Caco-2 (cell line): ENCODE measurements at regions of chr11 and their contacts with region 1.

Region 1: GRCh38 chr11:46916286-46917108 is 1.9 kb downstream of the LRP4 start:
- DNase-seq: peak; percentile 66 to 69
- H3K4me3 ChIP-seq: peak overlapping the region; percentile 74
- H3K4me3 Mint-ChIP-seq: peak overlapping the region; percentile 88
- H3K27ac Mint-ChIP-seq: peak overlapping the region; percentile 65
- H3K4me1 ChIP-seq: peaks cover 11% of the 10 kb centered on the region; the same call in 1 of the 2 replicates
- H3K4me1 Mint-ChIP-seq: peaks cover 20% of the 10 kb centered on the region
- H3K27me3 ChIP-seq: no peaks in the 10 kb centered on the region
- H3K27me3 Mint-ChIP-seq: no peaks in the 10 kb centered on the region
- CTCF ChIP-seq: peak in 1 of 2 experiments; percentile 36

Region 2: GRCh38 chr11:46808799-46809431 is 107.6 kb before region 1 on chr11:
- CTCF ChIA-PET with region 1: no interaction called
- POLR2A ChIA-PET with region 1: no interaction called
- intact Hi-C with region 1: no loop called
- DNase-seq: peak in 1 of 2 experiments; percentile 35
- H3K4me3 ChIP-seq: no peak overlapping the region
- H3K4me3 Mint-ChIP-seq: no peak overlapping the region
- H3K27ac Mint-ChIP-seq: no peak overlapping the region
- H3K4me1 ChIP-seq: no peaks in the 10 kb centered on the region
- H3K4me1 Mint-ChIP-seq: peaks cover 6% of the 10 kb centered on the region
- H3K27me3 ChIP-seq: no peaks in the 10 kb centered on the region
- H3K27me3 Mint-ChIP-seq: no peaks in the 10 kb centered on the region
- CTCF ChIP-seq: peak; percentile 18 to 56

Region 3: DNA sequence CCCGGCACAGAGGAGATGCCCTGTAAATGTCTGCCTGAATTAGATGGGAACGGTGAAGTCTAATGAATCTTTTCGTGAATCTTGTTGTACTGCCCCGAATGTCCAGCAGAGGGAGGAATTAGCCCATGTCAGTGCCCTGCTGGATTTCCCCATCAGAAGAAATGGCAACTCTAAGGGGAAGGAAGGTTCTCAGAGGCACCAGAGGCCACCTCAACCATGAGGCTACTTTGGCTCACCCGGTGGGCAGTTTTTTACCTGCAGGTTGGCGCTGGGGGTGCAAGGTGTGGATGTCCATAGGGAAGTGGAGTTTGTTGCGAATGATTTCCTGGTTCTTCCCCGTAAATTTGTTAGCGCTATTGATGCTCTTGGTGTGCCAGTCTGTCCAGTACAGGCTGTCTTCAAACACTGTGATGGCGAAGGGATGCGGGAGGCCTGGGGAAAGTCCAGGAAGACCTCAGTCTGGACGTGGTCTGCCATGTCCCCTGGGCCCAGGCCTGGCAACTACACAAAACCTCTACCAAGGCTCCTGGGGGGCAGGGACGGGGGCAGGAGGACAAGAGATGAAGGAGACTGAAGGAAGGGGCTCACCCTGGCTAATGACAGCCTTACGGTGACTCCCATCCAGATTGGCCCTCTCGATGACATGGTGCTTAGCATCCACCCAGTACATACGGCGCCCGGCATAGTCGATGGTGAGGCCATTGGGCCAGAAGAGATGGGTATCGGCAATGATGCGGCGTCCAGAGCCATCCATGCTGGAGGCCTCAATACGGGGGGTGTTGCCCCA is 26.6 kb before region 1 on chr11:
- CTCF ChIA-PET with region 1: no interaction called
- POLR2A ChIA-PET with region 1: no interaction called
- intact Hi-C with region 1: no loop called
- DNase-seq: peak; percentile 67 to 81
- H3K4me3 ChIP-seq: no peak overlapping the region
- H3K4me3 Mint-ChIP-seq: no peak overlapping the region
- H3K27ac Mint-ChIP-seq: no peak overlapping the region
- H3K4me1 ChIP-seq: no peaks in the 10 kb centered on the region
- H3K4me1 Mint-ChIP-seq: no peaks in the 10 kb centered on the region
- H3K27me3 ChIP-seq: no peaks in the 10 kb centered on the region
- H3K27me3 Mint-ChIP-seq: no peaks in the 10 kb centered on the region
- CTCF ChIP-seq: peak; percentile 85 to 91

Region 4: GRCh38 chr11:46936138-46937110 is 19.9 kb after region 1 on chr11 and contains the start of gene CSTPP1:
- CTCF ChIA-PET with region 1: interaction called, 11 read pairs
- POLR2A ChIA-PET with region 1: interaction called, 3 read pairs
- intact Hi-C with region 1: loop called (anchors 1 kb)
- DNase-seq: peak; percentile 97
- H3K4me3 ChIP-seq: peak within 1 kb of the TSS; percentile 83
- H3K4me3 Mint-ChIP-seq: peak within 1 kb of the TSS; percentile 75
- H3K27ac Mint-ChIP-seq: peak within 1 kb of the TSS; percentile 75
- H3K4me1 ChIP-seq: 0 out of 2 replicates have a peak, but pooled peaks cover 4% of the 10 kb centered on the region
- H3K4me1 Mint-ChIP-seq: peaks cover 7% of the 10 kb centered on the region
- H3K27me3 ChIP-seq: no peaks in the 10 kb centered on the region
- H3K27me3 Mint-ChIP-seq: peaks cover 3% of the 10 kb centered on the region
- CTCF ChIP-seq: no peak
- total RNA-seq, gene CSTPP1: 19.8 and 22.9 TPM in 2 replicates